Activated CD4-positive, alpha-beta memory T cell treated with anti-CD3 and anti-CD28 coated beads for 36 hours (primary cell): ENCODE measurements at regions of chr10 and their contacts with region 1.

Region 1: GRCh38 chr10:123994417-123995081 is 98.8 kb downstream of the CHST15 start:
- DNase-seq: peak; percentile 84
- H3K4me3 Mint-ChIP-seq: no peak overlapping the region
- H3K27ac Mint-ChIP-seq: no peak overlapping the region
- H3K4me1 Mint-ChIP-seq: peaks cover 7% of the 10 kb centered on the region
- H3K27me3 Mint-ChIP-seq: peaks cover 59% of the 10 kb centered on the region

Region 2: DNA sequence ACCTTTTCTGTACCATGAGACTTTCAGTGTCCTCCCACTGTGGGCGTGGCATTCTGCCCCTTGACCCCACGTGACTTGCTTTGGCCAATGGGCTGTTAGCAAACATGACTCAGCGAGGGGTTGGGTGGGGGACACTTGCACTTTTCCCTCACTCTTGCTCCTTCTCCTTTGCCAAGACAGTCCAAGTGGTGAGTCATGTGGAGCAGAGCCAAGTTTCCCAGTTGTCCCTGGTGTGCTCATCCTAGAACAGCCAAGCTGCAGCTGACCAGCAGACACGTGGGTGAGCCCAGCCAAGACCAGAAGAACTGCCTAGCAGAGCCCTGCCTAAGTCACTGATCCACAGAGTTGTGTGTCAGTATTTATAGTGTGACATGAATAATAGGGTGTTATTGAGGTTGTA is 20.1 kb before region 1 on chr10:
- CTCF ChIA-PET with region 1: interaction called, 14 read pairs
- POLR2A ChIA-PET with region 1: no interaction called
- intact Hi-C with region 1: no loop called
- DNase-seq: no peak
- H3K4me3 Mint-ChIP-seq: no peak overlapping the region
- H3K27ac Mint-ChIP-seq: no peak overlapping the region
- H3K4me1 Mint-ChIP-seq: no peaks in the 10 kb centered on the region
- H3K27me3 Mint-ChIP-seq: peaks cover 58% of the 10 kb centered on the region

Region 3: DNA sequence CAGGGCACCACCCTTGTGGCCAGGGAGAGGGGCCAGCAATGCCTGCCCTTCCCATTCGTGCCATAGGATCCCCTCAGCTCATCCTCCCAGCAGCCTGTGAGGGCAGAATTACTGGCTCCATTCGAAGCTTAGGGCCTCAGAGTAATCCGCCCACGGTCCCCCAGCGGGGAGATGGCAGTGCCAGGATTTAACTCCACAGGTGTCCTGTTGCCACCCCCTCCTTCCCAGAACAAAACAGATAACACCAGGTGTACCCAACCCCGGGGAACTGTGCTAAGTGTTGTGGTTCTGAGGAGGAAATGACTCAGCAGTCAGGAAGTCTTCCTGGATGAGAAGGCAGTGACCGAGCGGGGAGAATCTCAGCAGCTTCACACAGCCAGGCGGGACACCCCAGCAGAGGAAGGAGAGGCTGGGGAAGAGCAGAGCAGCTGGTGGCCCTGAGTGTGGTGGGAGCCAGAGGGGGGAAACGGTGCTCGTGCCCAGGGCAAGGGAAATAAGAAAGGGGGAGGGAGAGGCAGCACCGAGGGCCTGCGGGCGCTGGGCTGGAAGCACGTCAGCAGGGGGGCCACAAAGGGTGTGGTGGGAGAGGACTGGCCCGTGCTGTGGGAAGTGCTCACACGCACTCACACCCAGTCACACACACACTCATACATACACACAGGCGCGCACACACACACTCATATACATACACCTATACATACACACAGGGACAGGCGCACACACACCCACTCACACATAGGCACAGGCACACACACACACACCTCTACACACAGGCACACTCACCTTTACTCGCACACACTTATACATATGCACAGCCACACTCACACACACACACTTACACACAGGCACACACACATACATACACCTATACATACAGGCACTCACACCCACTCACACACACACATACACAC is 158.6 kb after region 1 on chr10:
- CTCF ChIA-PET with region 1: no interaction called
- POLR2A ChIA-PET with region 1: no interaction called
- intact Hi-C with region 1: loop called (anchors 10 kb)
- DNase-seq: peak; percentile 67
- H3K4me3 Mint-ChIP-seq: no peak overlapping the region
- H3K27ac Mint-ChIP-seq: no peak overlapping the region
- H3K4me1 Mint-ChIP-seq: no peaks in the 10 kb centered on the region
- H3K27me3 Mint-ChIP-seq: no peaks in the 10 kb centered on the region

Region 4: GRCh38 chr10:124231168-124232155 is 236.9 kb after region 1 on chr10:
- CTCF ChIA-PET with region 1: interaction called, 9 read pairs
- POLR2A ChIA-PET with region 1: no interaction called
- intact Hi-C with region 1: loop called (anchors 10 kb)
- DNase-seq: peak; percentile 83
- H3K4me3 Mint-ChIP-seq: peak overlapping the region; percentile 24
- H3K27ac Mint-ChIP-seq: peak overlapping the region; percentile 55
- H3K4me1 Mint-ChIP-seq: peaks cover 2% of the 10 kb centered on the region
- H3K27me3 Mint-ChIP-seq: no peaks in the 10 kb centered on the region

Region 5: DNA sequence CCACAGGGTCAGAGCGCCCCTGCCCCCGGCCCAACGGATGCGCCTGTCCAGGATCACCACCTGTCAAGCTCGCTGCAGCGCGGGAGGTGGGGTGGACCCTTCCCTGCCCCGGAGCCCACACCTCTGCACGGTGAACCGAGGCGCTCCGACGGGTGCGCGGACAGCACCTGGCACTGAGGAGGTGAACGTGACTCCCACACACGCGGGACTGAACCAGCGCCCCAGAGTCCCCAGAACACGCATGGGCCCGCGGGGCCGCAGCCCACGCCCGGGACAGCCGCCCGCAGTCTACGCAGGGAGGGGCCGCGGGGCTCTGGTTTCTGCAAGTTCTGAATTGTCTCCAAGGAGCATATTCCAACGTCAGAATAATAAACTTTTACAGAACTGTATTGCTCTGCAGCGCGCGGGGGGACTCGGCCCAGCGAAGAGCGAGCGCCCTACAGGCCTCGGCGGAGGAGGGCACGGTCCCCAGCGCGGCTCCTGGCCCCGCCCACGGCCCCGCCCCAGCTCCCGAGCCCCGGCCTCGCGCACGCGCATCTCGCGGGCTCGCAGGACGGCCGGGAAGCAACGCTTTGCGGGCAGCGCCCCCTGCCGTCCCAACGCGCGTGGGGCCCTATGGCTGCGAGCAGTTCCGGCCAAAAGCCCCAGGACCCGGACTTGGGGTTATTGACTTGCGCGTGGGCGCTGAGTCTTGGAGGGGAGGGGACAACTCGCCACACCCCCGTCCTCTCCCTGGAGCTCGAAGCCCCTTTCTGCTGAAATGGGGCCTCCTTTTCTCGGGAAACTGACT is 394.5 kb after region 1 on chr10:
- CTCF ChIA-PET with region 1: interaction called, 241 read pairs
- POLR2A ChIA-PET with region 1: no interaction called
- intact Hi-C with region 1: loop called (anchors 1 kb)
- DNase-seq: peak; percentile 93
- H3K4me3 Mint-ChIP-seq: peak overlapping the region; percentile 29
- H3K27ac Mint-ChIP-seq: no peak overlapping the region
- H3K4me1 Mint-ChIP-seq: peaks cover 3% of the 10 kb centered on the region
- H3K27me3 Mint-ChIP-seq: no peaks in the 10 kb centered on the region

Region 6: GRCh38 chr10:124394583-124394982 is 400.0 kb after region 1 on chr10:
- CTCF ChIA-PET with region 1: interaction called, 241 read pairs
- POLR2A ChIA-PET with region 1: no interaction called
- intact Hi-C with region 1: loop called (anchors 1 kb)
- DNase-seq: no peak
- H3K4me3 Mint-ChIP-seq: no peak overlapping the region
- H3K27ac Mint-ChIP-seq: no peak overlapping the region
- H3K4me1 Mint-ChIP-seq: peaks cover 2% of the 10 kb centered on the region
- H3K27me3 Mint-ChIP-seq: no peaks in the 10 kb centered on the region

Region 7: DNA sequence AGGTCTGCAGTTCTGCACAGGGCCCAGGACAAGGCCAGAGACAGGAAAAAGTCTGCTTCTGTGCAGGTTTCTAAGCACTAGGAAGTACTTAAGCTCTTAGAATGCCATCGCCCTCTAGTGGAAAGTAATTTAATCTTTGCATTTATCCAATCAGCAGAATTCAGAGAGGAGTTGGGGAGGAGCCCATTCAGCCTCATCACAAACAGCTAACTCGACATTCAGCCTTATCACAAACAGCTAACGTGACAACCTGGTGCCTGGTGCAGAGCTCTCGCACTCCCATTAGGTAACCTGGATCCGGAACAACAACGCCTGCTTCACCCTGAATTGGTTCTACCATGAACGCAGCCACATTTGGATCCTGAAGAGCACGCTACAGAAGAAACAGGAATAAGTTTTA is 409.0 kb after region 1 on chr10:
- CTCF ChIA-PET with region 1: interaction called, 54 read pairs
- POLR2A ChIA-PET with region 1: no interaction called
- intact Hi-C with region 1: no loop called
- DNase-seq: peak; percentile 25
- H3K4me3 Mint-ChIP-seq: no peak overlapping the region
- H3K27ac Mint-ChIP-seq: no peak overlapping the region
- H3K4me1 Mint-ChIP-seq: peaks cover 8% of the 10 kb centered on the region
- H3K27me3 Mint-ChIP-seq: no peaks in the 10 kb centered on the region